ENCODE measurements at regions of chr12 and their contacts with region 1.

Region 1: DNA sequence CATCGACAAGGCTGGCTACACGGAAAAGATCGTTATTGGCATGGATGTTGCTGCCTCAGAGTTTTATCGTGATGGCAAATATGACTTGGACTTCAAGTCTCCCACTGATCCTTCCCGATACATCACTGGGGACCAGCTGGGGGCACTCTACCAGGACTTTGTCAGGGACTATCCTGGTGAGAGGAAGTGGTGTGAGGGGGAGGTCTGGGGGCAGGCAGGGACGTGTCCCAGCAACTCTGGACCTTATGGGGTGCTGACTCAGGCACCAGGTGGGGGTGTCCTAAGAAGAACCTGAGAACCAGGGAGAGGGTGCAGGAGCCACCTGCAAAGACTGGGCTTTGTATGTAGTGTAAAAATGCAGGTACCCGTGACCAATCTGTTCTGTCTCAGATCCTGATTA is 5.2 kb downstream of the ENO2 start:
- DNase-seq: no peak
- H3K27ac ChIP-seq: no peak overlapping the region
- CTCF ChIP-seq: no peak

Region 2: GRCh38 chr12:6653987-6654386 is 265.6 kb before region 1 on chr12:
- CTCF ChIA-PET with region 1: no interaction called
- POLR2A ChIA-PET with region 1: interaction called, 11 read pairs
- DNase-seq: no peak
- H3K27ac ChIP-seq: no peak overlapping the region
- CTCF ChIP-seq: no peak

Region 3: DNA sequence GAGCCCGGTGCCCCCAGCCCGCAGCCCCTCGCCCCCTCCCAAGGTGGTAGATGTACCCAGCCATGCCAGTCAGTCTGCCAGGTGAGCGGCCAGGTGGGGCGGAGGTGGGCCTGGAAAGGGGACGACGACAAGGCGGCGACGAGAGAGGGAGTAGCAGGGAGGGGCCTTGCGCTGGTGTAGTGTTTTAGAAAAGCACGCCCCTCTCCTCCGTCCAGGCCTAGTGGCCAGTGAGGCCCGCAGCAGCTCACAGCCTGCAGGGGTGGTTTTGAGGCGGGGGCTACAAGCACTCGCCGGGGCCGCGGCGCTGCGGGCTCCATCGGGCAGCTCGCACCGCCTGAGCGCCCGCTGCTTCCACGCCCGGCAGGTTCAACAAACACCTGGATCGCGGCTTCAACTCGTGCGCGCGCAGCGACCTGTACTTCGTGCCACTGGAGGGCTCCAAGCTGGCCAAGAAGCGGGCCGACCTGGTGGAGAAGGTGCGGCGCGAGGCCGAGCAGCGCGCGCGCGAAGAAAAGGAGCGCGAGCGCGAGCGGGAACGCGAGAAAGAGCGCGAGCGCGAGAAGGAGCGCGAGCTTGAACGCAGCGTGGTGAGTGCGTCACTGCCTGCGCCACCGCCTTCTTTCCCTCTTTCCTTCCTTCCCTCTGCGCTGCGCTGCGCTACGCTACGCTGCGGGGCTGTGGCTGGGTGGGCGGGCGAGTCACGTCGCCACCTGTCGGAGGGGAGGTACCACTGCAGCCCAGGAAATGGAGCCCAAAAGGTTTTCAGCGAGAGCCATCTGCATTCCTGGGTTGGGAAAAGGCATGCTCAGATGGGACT is 18.1 kb after region 1 on chr12:
- CTCF ChIA-PET with region 1: interaction called, 15 read pairs
- POLR2A ChIA-PET with region 1: no interaction called
- DNase-seq: peak; percentile 74
- H3K27ac ChIP-seq: peak overlapping the region; percentile 82
- CTCF ChIP-seq: peak; percentile 78